ENCODE measurements at regions of chr15 and their contacts with region 1.

Region 1: GRCh38 chr15:68875377-68876116 is 54.8 kb upstream of the SPESP1 start:
- DNase-seq: peak; percentile 96
- H3K4me3 Mint-ChIP-seq: peak overlapping the region; percentile 14
- H3K27ac Mint-ChIP-seq: no peak overlapping the region
- H3K4me1 Mint-ChIP-seq: no peaks in the 10 kb centered on the region
- H3K27me3 Mint-ChIP-seq: peaks cover 6% of the 10 kb centered on the region

Region 2: GRCh38 chr15:68559345-68560310 is 315.9 kb before region 1 on chr15:
- CTCF ChIA-PET with region 1: interaction called, 40 read pairs
- intact Hi-C with region 1: loop called (anchors 1 kb)
- DNase-seq: peak; percentile 76
- H3K4me3 Mint-ChIP-seq: peak overlapping the region; percentile 68
- H3K27ac Mint-ChIP-seq: no peak overlapping the region
- H3K4me1 Mint-ChIP-seq: peaks cover 15% of the 10 kb centered on the region
- H3K27me3 Mint-ChIP-seq: peaks cover 32% of the 10 kb centered on the region

Region 3: GRCh38 chr15:68730471-68730919 is 145.1 kb before region 1 on chr15:
- CTCF ChIA-PET with region 1: interaction called, 30 read pairs
- intact Hi-C with region 1: loop called (anchors 1 kb)
- DNase-seq: peak; percentile 43
- H3K4me3 Mint-ChIP-seq: no peak overlapping the region
- H3K27ac Mint-ChIP-seq: no peak overlapping the region
- H3K4me1 Mint-ChIP-seq: peaks cover 2% of the 10 kb centered on the region
- H3K27me3 Mint-ChIP-seq: no peaks in the 10 kb centered on the region

Region 4: GRCh38 chr15:68829068-68829467 is 46.5 kb before region 1 on chr15:
- CTCF ChIA-PET with region 1: interaction called, 7 read pairs
- intact Hi-C with region 1: loop called (anchors 2 kb)
- DNase-seq: peak; percentile 47
- H3K4me3 Mint-ChIP-seq: no peak overlapping the region
- H3K27ac Mint-ChIP-seq: no peak overlapping the region
- H3K4me1 Mint-ChIP-seq: peaks cover 18% of the 10 kb centered on the region
- H3K27me3 Mint-ChIP-seq: no peaks in the 10 kb centered on the region